MCF 10A (cell line): ENCODE measurements at regions of chr12 and their contacts with region 1.

Region 1: DNA sequence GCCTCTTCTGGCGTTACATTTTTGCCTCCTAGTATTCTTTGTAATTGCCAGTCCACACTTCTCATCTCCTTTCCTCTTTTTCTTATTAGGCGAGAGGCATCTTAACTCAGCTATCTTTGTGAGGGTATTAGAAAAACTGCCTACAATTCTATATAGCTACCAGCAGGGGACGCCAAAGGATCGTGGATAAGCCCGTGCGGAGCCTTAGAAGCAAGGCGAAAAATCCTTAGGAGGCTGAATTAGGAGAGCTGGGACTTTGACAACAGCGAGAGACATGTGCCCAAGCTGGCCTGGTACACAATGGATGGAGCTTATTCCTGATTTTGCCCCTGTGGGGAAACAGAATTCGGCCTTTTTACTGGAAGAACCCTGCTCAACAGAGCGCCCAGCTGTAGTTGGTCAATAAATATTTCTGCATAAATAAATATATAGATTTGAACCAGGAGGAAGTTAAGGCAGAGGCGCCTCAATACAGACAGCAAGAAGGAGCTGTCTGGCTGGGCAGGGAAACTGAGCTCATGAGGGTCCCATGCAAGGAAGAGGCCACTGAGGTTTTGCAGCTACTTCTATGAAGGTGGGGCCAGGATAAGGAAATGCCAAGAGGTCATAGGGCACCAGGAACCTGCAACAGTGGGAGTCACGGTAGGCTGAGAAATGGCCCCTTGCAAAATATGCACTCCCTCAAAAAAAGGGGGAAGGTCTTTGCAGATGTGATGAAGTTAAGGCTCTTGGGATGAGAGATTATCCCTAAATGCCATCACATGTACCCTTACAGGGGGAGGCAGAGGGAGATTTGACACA is 14.6 kb upstream of the RBM19 start:
- DNase-seq: peak; percentile 79
- H3K4me3 Mint-ChIP-seq: no peak overlapping the region
- H3K27ac Mint-ChIP-seq: no peak overlapping the region
- H3K4me1 Mint-ChIP-seq: no peaks in the 10 kb centered on the region
- H3K27me3 Mint-ChIP-seq: peaks cover 40% of the 10 kb centered on the region
- CTCF ChIP-seq: peak; percentile 95

Region 2: GRCh38 chr12:113700943-113701342 is 279.8 kb before region 1 on chr12:
- CTCF ChIA-PET with region 1: no interaction called
- POLR2A ChIA-PET with region 1: no interaction called
- intact Hi-C with region 1: no loop called
- DNase-seq: peak; percentile 31
- H3K4me3 Mint-ChIP-seq: no peak overlapping the region
- H3K27ac Mint-ChIP-seq: no peak overlapping the region
- H3K4me1 Mint-ChIP-seq: peaks cover 6% of the 10 kb centered on the region
- H3K27me3 Mint-ChIP-seq: peaks cover 51% of the 10 kb centered on the region
- CTCF ChIP-seq: no peak

Region 3: DNA sequence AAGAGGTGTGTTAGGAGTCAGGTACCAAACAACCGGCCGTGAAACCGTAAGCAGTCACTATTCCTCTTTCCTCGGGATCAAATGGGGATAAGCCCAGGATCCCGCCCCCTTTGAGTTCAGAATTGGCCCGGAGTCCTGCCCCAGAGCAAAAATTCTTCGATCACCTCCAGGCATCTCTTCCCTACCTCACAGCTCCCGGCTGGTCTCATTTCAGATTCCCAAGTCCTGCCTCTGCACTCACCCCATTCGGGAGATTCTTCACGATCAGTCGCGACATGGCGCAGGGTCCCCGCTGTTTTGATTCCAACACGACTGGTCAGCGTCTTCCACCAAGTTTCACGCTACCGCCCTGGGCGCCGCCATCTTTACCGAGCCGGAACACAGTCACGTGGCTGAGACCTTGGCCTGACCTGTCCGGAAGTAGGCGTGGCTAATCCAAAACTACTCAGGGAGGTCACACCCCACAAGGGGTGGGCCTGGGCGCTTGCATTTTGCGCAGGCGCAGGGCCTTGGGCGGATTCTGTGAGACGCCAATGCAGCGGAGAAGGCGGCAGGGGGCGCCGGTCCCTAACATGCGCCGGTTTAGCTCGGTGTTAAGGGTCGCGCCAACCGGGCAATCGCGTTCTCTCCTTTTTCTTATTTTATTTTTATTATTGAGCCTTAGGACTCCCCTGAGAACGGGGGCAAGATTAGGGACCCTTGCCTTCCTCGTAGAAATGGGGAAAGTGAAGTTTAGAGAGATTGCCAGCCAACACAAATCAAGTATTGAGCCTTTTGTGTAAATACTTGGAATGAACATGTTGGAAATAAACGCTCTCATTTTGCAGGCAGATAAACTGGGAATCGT is 14.6 kb before region 1 on chr12 and contains the start of gene RBM19:
- CTCF ChIA-PET with region 1: interaction called, 26 read pairs
- POLR2A ChIA-PET with region 1: no interaction called
- intact Hi-C with region 1: no loop called
- DNase-seq: peak; percentile 99
- H3K4me3 Mint-ChIP-seq: peak within 1 kb of the TSS; percentile 98
- H3K27ac Mint-ChIP-seq: peak within 1 kb of the TSS; percentile 98
- H3K4me1 Mint-ChIP-seq: peaks cover 27% of the 10 kb centered on the region
- H3K27me3 Mint-ChIP-seq: no peaks in the 10 kb centered on the region
- CTCF ChIP-seq: peak; percentile 89
- total RNA-seq, gene RBM19: 22.0 and 29.2 TPM in 2 replicates

Region 4: GRCh38 chr12:114213055-114213581 is 232.4 kb after region 1 on chr12:
- CTCF ChIA-PET with region 1: interaction called, 4 read pairs
- POLR2A ChIA-PET with region 1: no interaction called
- intact Hi-C with region 1: loop called (anchors 1 kb)
- DNase-seq: peak; percentile 13
- H3K4me3 Mint-ChIP-seq: no peak overlapping the region
- H3K27ac Mint-ChIP-seq: no peak overlapping the region
- H3K4me1 Mint-ChIP-seq: no peaks in the 10 kb centered on the region
- H3K27me3 Mint-ChIP-seq: peaks cover 51% of the 10 kb centered on the region
- CTCF ChIP-seq: no peak

Region 5: GRCh38 chr12:114491916-114492315 is 511.2 kb after region 1 on chr12:
- CTCF ChIA-PET with region 1: interaction called, 11 read pairs
- POLR2A ChIA-PET with region 1: no interaction called
- intact Hi-C with region 1: no loop called
- DNase-seq: no peak
- H3K4me3 Mint-ChIP-seq: no peak overlapping the region
- H3K27ac Mint-ChIP-seq: no peak overlapping the region
- H3K4me1 Mint-ChIP-seq: no peaks in the 10 kb centered on the region
- H3K27me3 Mint-ChIP-seq: peaks cover 84% of the 10 kb centered on the region
- CTCF ChIP-seq: no peak

Region 6: DNA sequence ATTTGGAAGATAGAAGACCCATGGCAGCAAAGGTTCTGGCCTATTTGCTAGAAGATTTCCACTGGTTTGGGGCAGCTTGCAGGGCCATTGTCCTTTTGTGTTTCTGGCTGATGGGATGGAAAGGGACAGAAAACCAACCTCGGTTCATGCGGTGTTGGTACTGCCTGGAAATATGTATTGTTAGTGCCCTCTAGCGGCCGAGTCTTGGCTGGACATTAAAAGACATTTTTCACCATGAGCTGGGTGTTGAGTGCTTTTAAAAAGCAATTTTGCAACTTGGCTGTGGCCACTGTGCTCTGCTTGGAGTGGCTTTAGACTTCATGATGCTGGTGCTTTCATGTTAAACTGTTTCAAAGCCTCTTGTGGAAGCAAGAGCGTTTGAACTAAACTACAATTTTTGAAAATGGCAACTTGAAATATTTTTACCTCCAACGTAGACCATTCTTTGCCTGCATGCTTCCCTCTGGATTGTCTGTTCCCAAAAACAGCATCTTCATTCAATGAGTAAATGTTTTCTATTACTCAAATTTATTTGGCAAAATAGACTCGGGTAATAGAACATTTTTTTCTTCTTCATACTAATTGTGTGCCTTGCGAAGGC is 527.9 kb after region 1 on chr12:
- CTCF ChIA-PET with region 1: interaction called, 134 read pairs
- POLR2A ChIA-PET with region 1: no interaction called
- intact Hi-C with region 1: loop called (anchors 1 kb)
- DNase-seq: peak; percentile 73
- H3K4me3 Mint-ChIP-seq: no peak overlapping the region
- H3K27ac Mint-ChIP-seq: no peak overlapping the region
- H3K4me1 Mint-ChIP-seq: no peaks in the 10 kb centered on the region
- H3K27me3 Mint-ChIP-seq: peaks cover 60% of the 10 kb centered on the region
- CTCF ChIP-seq: peak; percentile 61